ENCODE measurements at regions of chr9 and their contacts with region 1.

Region 1: GRCh38 chr9:84781458-84781857 is 111.9 kb downstream of the NTRK2 start:
- DNase-seq: no peak
- ATAC-seq: no peak
- H3K4me3 Mint-ChIP-seq: no peak overlapping the region
- H3K27ac Mint-ChIP-seq: no peak overlapping the region
- H3K4me1 Mint-ChIP-seq: no peaks in the 10 kb centered on the region
- H3K27me3 Mint-ChIP-seq: peaks cover 2% of the 10 kb centered on the region
- CTCF ChIP-seq: no peak

Region 2: DNA sequence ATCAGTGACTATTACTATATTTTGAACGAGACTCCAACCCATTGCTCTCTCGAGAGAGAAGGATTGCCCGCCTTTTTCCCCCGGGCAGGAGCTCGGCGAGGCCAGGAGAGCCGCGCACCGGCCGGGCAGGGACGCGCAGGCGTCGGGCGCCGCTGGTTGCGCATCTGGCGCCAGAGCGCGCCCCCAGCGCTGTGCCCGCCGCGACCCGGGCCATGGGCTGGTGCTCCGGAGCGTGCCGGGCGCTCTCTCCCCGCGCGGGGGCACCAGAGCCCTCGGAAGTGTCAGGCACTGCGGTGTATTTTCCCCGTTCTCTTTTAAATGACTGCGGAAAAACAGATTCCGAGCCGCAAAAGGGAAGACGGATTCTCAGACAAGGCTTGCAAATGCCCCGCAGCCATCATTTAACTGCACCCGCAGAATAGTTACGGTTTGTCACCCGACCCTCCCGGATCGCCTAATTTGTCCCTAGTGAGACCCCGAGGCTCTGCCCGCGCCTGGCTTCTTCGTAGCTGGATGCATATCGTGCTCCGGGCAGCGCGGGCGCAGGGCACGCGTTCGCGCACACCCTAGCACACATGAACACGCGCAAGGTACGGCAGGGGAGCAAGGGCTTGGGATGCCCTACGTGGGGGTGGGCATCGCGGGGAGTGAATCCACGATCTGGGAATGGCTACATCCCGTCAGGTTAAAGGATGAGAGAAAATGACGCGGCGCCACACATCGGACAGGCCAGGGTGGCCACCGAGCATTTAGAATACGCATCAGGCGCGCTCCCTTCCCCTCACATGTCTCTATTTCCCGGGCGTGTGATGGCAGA is 113.1 kb before region 1 on chr9:
- CTCF ChIA-PET with region 1: interaction called, 3 read pairs
- POLR2A ChIA-PET with region 1: no interaction called
- intact Hi-C with region 1: loop called (anchors 5 kb)
- DNase-seq: no peak
- ATAC-seq: peak; percentile 49
- H3K4me3 Mint-ChIP-seq: peak overlapping the region; percentile 48
- H3K27ac Mint-ChIP-seq: no peak overlapping the region
- H3K4me1 Mint-ChIP-seq: peaks cover 24% of the 10 kb centered on the region
- H3K27me3 Mint-ChIP-seq: peaks cover 51% of the 10 kb centered on the region
- CTCF ChIP-seq: no peak

Region 3: GRCh38 chr9:84697509-84698114 is 83.8 kb before region 1 on chr9:
- CTCF ChIA-PET with region 1: interaction called, 8 read pairs
- POLR2A ChIA-PET with region 1: no interaction called
- intact Hi-C with region 1: loop called (anchors 1 kb)
- DNase-seq: no peak
- ATAC-seq: no peak
- H3K4me3 Mint-ChIP-seq: no peak overlapping the region
- H3K27ac Mint-ChIP-seq: no peak overlapping the region
- H3K4me1 Mint-ChIP-seq: no peaks in the 10 kb centered on the region
- H3K27me3 Mint-ChIP-seq: peaks cover 7% of the 10 kb centered on the region
- CTCF ChIP-seq: no peak

Region 4: DNA sequence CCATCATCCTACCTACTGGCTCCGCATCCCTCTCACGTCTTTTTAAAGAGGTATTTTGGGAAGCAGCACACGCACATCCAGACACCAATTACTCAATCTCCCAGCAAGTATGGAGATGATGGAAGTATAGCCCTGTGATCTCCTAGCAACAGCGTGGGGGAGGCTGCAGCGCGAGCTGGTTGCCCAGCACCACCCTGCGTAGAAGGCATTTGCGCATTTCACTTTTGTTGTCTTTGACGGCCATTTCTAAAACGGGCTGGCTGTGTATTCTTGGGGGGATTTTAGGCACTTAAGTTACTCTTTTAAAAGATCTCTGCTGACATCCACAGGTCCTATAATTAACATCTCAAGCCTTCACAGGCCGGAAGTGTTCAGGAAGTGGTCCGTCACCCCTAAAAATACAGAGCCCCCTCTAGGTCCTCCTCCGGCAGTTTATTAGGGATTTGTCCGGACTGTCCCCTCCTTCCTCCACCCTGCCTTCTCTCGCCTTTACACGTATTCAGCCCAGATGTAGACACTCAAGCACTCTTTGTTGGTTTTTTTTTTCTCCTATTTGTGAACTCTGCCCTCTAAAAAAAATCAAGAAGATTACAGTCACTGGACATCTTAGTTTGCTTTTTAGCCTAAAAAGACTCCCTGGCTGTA is 259.5 kb after region 1 on chr9:
- CTCF ChIA-PET with region 1: no interaction called
- POLR2A ChIA-PET with region 1: no interaction called
- intact Hi-C with region 1: no loop called
- DNase-seq: no peak
- ATAC-seq: no peak
- H3K4me3 Mint-ChIP-seq: no peak overlapping the region
- H3K27ac Mint-ChIP-seq: no peak overlapping the region
- H3K4me1 Mint-ChIP-seq: no peaks in the 10 kb centered on the region
- H3K27me3 Mint-ChIP-seq: no peaks in the 10 kb centered on the region
- CTCF ChIP-seq: no peak